Dendritic cell treated with granulocyte-macrophage colony-stimulating factor and Interleukin-4, amounts not matched to agents 40 ng/mL and 50 ng/mL, for 4 days (primary cell): ENCODE measurements at regions of chr3 and their contacts with region 1.

Region 1: GRCh38 chr3:158790901-158791589 is 10.8 kb upstream of the MFSD1 start:
- H3K4me3 Mint-ChIP-seq: peak overlapping the region; percentile 39
- H3K27ac Mint-ChIP-seq: no peak overlapping the region
- H3K4me1 Mint-ChIP-seq: no peaks in the 10 kb centered on the region
- H3K27me3 Mint-ChIP-seq: no peaks in the 10 kb centered on the region

Region 2: DNA sequence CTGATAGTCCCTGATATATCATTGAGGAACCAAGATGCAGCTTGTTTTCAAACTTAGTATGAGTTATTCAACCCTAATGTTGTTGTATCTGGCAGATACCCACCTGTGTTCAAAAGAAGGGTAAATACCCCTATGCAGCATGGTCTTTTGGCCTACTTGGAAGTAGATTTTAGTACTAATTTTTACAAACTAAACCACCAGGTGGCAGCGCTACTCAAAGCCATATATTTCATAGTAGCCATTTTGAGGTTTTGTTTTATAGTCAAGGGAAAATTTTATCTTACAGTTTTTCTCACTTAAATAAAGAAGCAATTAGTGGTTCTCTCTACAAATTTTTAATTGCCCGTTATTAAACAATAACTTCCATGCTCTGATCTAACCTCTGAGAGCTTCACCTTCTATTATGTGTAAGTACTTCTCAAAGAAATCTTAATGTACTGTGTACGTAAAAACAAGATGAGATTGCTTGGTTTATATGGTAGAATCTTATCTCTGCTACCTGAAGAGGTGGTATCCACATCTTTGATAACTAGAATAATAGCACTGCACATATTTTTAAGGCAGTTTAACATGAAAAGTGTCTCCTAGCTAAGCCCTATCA is 251.5 kb before region 1 on chr3:
- intact Hi-C with region 1: loop called (anchors 2 kb)
- H3K4me3 Mint-ChIP-seq: no peak overlapping the region
- H3K27ac Mint-ChIP-seq: no peak overlapping the region
- H3K4me1 Mint-ChIP-seq: no peaks in the 10 kb centered on the region
- H3K27me3 Mint-ChIP-seq: no peaks in the 10 kb centered on the region

Region 3: GRCh38 chr3:158659454-158660237 is 131.4 kb before region 1 on chr3:
- intact Hi-C with region 1: loop called (anchors 1 kb)
- H3K4me3 Mint-ChIP-seq: no peak overlapping the region
- H3K27ac Mint-ChIP-seq: no peak overlapping the region
- H3K4me1 Mint-ChIP-seq: no peaks in the 10 kb centered on the region
- H3K27me3 Mint-ChIP-seq: no peaks in the 10 kb centered on the region

Region 4: GRCh38 chr3:158727206-158728060 is 63.6 kb before region 1 on chr3:
- intact Hi-C with region 1: loop called (anchors 2 kb)
- H3K4me3 Mint-ChIP-seq: peak overlapping the region; percentile 37
- H3K27ac Mint-ChIP-seq: peak overlapping the region; percentile 91
- H3K4me1 Mint-ChIP-seq: peaks cover 31% of the 10 kb centered on the region
- H3K27me3 Mint-ChIP-seq: peaks cover 13% of the 10 kb centered on the region

Region 5: DNA sequence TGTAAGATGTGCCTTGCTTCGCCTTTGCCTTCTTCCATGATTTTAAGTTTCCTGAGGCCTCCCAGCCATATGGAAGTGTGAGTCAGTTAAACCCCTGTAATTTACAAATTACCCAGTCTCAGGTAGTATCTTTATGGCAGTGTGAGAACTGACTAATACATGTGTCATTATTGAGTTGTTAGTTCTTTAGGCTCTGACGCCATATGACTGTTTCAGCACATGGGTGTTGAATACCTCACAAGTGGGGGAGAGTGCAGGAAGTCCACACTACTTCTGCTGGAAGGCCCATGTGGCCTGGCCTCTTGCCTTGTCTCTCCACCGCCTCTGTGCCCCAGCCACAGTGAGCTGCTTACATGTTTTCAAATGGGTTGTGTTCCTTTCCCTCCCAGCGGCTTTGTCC is 39.3 kb after region 1 on chr3:
- intact Hi-C with region 1: loop called (anchors 5 kb)
- H3K4me3 Mint-ChIP-seq: no peak overlapping the region
- H3K27ac Mint-ChIP-seq: no peak overlapping the region
- H3K4me1 Mint-ChIP-seq: no peaks in the 10 kb centered on the region
- H3K27me3 Mint-ChIP-seq: no peaks in the 10 kb centered on the region

Region 6: DNA sequence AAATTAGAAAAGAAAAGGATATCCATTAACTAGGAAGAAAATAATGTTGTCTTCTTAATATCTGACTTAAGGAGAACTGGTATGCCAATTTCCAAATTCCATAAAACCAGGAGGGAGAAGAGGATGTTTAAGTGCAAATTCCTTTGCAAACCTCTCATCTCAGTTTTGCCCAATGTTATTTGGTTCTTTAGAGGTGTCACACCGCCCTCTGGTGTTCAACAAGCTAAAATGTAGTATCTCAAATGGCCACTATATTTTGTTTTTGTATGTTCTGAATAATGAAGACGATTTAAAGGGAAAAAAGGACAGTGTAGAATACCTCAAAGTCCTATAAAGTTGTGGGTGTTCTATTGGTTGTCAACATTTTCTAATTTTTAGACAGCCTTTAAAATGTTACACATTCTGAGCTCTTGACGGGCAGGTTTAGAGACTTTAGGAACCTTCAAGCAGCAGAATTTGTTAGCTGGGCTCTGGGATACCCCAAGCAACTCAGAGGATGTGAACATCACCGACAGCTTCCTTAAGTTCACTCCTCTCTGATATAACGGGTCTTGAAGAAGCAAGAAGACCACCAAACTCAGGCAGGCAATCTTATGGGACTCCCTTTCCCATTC is 469.1 kb after region 1 on chr3:
- intact Hi-C with region 1: loop called (anchors 1 kb)
- H3K4me3 Mint-ChIP-seq: no peak overlapping the region
- H3K27ac Mint-ChIP-seq: no peak overlapping the region
- H3K4me1 Mint-ChIP-seq: no peaks in the 10 kb centered on the region
- H3K27me3 Mint-ChIP-seq: peaks cover 3% of the 10 kb centered on the region